IMR-90 (cell line): ENCODE measurements at regions of chr3 and their contacts with region 1.

Region 1: DNA sequence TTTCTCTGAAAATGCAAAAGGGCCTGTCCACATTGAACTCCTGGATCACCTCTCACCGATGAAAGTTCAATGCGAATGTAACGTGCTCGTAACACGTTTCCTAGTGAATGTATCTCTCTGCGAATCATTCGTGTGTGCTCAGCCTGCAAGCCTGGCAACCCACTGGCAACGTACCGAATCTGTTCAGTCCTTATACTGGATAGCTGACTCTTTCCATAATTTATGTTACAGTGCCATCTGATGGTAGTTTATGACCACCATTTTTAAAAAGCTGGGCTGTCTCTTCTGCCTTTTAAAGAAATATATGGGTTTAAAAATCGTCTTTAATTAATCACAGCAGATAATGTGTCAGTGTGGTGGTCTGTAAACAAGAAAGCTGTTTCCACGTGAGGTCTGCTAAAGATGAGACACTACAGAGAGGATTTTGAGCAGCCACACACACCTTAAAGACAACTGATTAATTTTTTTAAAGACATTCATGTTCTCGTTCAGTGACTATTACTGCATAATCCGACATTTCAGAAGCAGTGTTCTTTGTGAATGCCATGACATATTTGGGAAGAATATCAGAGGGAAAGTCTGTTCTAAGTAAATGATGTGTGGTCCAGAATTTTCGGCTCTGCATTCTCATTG is 69.4 kb upstream of the FOXP1 start:
- DNase-seq: peak; percentile 72
- ATAC-seq: peak; percentile 91
- H3K4me3 ChIP-seq: no peak overlapping the region
- H3K27ac ChIP-seq: no peak overlapping the region
- H3K4me1 ChIP-seq: no peaks in the 10 kb centered on the region
- H3K27me3 ChIP-seq: peaks cover 6% of the 10 kb centered on the region; the same call in 1 of the 2 replicates
- CTCF ChIP-seq: peak; percentile 76
- POLR2A ChIP-seq: no peak
- RAD21 ChIP-seq: peak; percentile 89

Region 2: GRCh38 chr3:70531063-70531657 is 1121.7 kb before region 1 on chr3:
- CTCF ChIA-PET with region 1: no interaction called
- POLR2A ChIA-PET with region 1: interaction called, 7 read pairs
- dilution Hi-C with region 1: no loop called
- in situ Hi-C with region 1: no loop called
- intact Hi-C with region 1: loop called (anchors 1 kb)
- DNase-seq: peak; percentile 57
- ATAC-seq: peak; percentile 32
- H3K4me3 ChIP-seq: no peak overlapping the region
- H3K27ac ChIP-seq: no peak overlapping the region
- H3K4me1 ChIP-seq: no peaks in the 10 kb centered on the region
- H3K27me3 ChIP-seq: peaks cover 23% of the 10 kb centered on the region
- CTCF ChIP-seq: peak; percentile 74
- POLR2A ChIP-seq: no peak
- RAD21 ChIP-seq: peak; percentile 76

Region 3: GRCh38 chr3:70550723-70551319 is 1102.1 kb before region 1 on chr3:
- CTCF ChIA-PET with region 1: interaction called, 4 read pairs
- POLR2A ChIA-PET with region 1: no interaction called
- dilution Hi-C with region 1: no loop called
- in situ Hi-C with region 1: loop called (anchors 10 kb)
- intact Hi-C with region 1: loop called (anchors 1 kb)
- DNase-seq: peak; percentile 54
- ATAC-seq: peak; percentile 93
- H3K4me3 ChIP-seq: no peak overlapping the region
- H3K27ac ChIP-seq: no peak overlapping the region
- H3K4me1 ChIP-seq: no peaks in the 10 kb centered on the region
- H3K27me3 ChIP-seq: peaks cover 5% of the 10 kb centered on the region; the same call in 1 of the 2 replicates
- CTCF ChIP-seq: peak; percentile 67
- POLR2A ChIP-seq: no peak
- RAD21 ChIP-seq: peak; percentile 79

Region 4: DNA sequence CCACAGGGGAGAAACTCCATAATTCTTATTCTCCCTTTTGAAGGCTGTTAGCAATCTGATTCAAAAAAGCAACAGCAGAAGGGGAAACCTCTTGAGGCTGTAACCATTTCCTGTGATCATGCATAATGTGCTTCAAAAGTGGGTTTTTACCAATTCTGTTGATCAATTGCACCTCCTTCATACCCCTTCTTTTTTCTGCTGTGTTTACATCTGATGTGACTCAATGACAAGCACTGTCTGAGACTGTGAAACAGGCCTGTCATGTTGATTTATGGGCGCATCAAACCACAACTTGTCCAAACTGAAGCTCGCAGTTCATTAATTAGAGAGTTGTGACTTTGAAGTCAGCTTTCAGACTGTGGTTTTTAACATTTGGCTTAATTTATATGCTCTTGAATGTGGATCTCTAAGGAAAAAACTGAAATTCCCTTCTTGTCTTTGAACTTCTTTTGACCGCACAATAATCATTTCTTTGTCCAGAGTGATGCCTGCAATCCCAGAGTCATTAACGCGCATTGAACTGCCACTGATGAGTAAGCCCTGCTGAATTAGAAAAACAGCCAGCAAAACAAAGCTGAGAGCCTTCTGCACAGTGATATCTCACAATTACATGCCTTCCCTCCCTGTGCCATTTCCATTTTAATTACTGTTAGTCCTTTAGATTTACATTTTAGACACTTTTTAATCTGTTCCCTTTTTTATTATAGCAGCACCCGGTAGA is 602.2 kb before region 1 on chr3:
- CTCF ChIA-PET with region 1: no interaction called
- POLR2A ChIA-PET with region 1: no interaction called
- dilution Hi-C with region 1: no loop called
- in situ Hi-C with region 1: no loop called
- intact Hi-C with region 1: loop called (anchors 10 kb)
- DNase-seq: peak; percentile 62
- ATAC-seq: peak; percentile 36
- H3K4me3 ChIP-seq: no peak overlapping the region
- H3K27ac ChIP-seq: peak overlapping the region; percentile 51; the same call in 1 of the 2 replicates
- H3K4me1 ChIP-seq: peaks cover 36% of the 10 kb centered on the region
- H3K27me3 ChIP-seq: no peaks in the 10 kb centered on the region
- CTCF ChIP-seq: no peak
- POLR2A ChIP-seq: no peak
- RAD21 ChIP-seq: no peak

Region 5: DNA sequence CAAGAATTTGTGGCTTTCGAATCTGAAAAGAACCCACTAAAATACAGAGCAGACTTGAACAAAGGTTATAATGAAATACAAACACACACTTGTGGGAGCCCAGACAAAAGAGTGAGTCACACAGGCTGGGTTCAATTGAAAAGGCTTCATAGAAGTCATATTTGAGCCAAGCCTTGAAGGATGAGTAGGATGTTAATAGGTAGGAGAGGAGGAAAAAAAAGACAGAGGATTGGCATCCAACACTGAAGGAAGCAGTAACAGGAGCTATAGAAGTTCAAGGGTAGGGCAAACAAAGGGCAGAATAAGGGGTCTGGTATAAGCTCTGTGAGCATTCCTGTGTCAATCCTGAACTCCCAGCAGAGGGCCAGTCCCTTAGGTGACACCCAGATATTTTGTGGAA is 394.8 kb before region 1 on chr3:
- CTCF ChIA-PET with region 1: no interaction called
- POLR2A ChIA-PET with region 1: no interaction called
- dilution Hi-C with region 1: no loop called
- in situ Hi-C with region 1: no loop called
- intact Hi-C with region 1: no loop called
- DNase-seq: peak; percentile 78
- ATAC-seq: peak; percentile 35
- H3K4me3 ChIP-seq: no peak overlapping the region
- H3K27ac ChIP-seq: peak overlapping the region; percentile 16
- H3K4me1 ChIP-seq: peaks cover 8% of the 10 kb centered on the region
- H3K27me3 ChIP-seq: no peaks in the 10 kb centered on the region
- CTCF ChIP-seq: no peak
- POLR2A ChIP-seq: no peak
- RAD21 ChIP-seq: no peak

Region 6: DNA sequence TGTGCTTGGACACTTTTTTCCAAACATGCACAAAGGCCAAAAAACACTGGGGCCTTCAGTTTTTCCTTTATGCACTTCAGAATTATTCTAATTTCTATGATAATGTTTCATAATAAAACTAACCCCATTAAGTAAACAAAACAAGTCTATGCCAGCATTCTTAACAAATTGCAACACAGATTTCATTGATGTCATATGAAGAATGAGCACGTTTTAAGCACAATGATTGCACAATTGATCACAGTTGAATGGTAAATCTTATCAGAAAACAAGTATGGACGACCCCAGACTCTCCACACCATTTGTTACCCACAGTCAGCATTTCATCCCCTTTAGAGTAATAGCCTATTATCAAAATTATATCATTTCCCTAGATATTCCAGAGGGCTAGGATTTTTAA is 178.7 kb after region 1 on chr3:
- CTCF ChIA-PET with region 1: no interaction called
- POLR2A ChIA-PET with region 1: no interaction called
- dilution Hi-C with region 1: no loop called
- in situ Hi-C with region 1: no loop called
- intact Hi-C with region 1: no loop called
- DNase-seq: no peak
- ATAC-seq: no peak
- H3K4me3 ChIP-seq: no peak overlapping the region
- H3K27ac ChIP-seq: no peak overlapping the region
- H3K4me1 ChIP-seq: no peaks in the 10 kb centered on the region
- H3K27me3 ChIP-seq: peaks cover 1% of the 10 kb centered on the region; the same call in 1 of the 2 replicates
- CTCF ChIP-seq: no peak
- POLR2A ChIP-seq: no peak
- RAD21 ChIP-seq: no peak